CD14-positive monocyte (primary cell): ENCODE measurements at regions of chr2 and their contacts with region 1.

Region 1: DNA sequence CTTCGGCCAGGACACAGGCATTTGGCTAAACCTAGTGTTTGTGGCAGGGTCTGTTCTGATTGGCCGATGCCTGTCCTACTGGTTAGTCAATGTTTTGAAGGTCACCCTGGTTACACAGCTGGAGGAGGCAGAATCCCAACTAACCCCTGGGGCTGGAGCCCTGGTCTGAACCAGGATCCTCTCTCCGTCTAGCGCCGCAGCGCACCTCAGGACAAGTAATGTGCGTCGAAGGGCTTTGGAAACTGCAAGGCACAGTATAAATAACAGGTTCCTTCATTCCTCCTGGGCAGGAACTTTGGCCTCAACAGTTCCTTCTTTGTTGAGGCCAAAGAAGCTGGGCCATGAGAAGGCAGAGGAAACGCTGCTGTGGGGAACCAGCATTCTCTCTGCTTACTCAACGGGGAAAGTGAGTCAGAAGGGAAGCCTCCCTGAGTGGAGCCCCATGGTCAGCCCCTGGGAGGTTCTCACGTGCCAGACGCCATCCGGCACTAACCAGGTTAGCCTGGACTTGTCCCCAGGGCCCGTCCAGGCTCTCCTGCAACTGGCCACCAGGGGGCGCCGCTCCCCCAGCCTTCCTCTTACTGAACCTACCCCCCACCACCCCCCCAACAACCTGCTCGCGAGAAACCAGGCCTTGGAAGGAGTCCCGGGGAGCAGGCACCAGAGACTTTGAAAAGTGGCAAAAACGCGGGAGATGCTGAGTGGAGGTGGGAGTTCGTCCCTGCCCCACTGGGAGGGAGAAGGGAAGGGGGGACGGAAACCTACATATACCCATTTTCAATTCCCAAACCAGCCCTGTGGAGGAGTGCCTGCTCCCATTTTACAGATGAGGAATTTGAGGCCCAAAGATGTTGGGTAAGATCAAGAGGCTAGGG is 19.8 kb downstream of the TEX44 start:
- DNase-seq: peak; percentile 98 to 99 (median 99)
- H3K4me3 ChIP-seq: peak overlapping the region in 1 of 3 experiments; percentile 76
- H3K4me3 Mint-ChIP-seq: peak overlapping the region; percentile 55 to 92
- H3K27ac ChIP-seq: peak overlapping the region; percentile 75 to 82
- H3K27ac Mint-ChIP-seq: peak overlapping the region; percentile 93 to 99 (median 96)
- H3K4me1 ChIP-seq: peaks cover 42 to 49% of the 10 kb centered on the region in 2 donors
- H3K4me1 Mint-ChIP-seq: peaks cover 53% of the 10 kb centered on the region
- H3K27me3 ChIP-seq: peaks cover 2 to 26% of the 10 kb centered on the region in 2 donors
- H3K27me3 Mint-ChIP-seq: peaks cover 20 to 39% (median 37%) of the 10 kb centered on the region in 3 donors
- CTCF ChIP-seq: peak; percentile 96

Region 2: DNA sequence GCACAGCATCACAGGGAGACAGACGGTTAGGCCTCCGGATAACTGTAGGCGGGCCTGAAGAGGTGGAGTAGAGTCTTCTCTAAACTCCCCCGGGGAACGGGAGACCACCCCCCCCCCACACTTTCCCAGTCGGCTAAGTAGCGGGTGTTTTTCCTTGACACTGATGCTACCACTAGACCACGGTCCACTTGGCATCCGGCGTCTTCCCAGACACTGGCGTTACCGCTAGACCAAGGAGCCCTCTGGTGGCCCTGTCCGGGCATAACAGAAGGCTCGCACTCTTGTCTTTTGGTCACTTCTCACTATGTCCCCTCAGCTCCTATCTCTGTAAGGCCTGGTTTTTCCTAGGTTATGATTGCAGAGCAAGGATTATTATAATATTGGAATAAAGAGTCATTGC is 122.4 kb before region 1 on chr2:
- intact Hi-C with region 1: no loop called
- DNase-seq: no peak
- H3K4me3 ChIP-seq: no peak overlapping the region
- H3K4me3 Mint-ChIP-seq: no peak overlapping the region
- H3K27ac ChIP-seq: no peak overlapping the region
- H3K27ac Mint-ChIP-seq: no peak overlapping the region
- H3K4me1 ChIP-seq: no peaks in the 10 kb centered on the region
- H3K4me1 Mint-ChIP-seq: no peaks in the 10 kb centered on the region
- H3K27me3 ChIP-seq: no peaks in the 10 kb centered on the region
- H3K27me3 Mint-ChIP-seq: peaks cover 0 to 7% (median 3%) of the 10 kb centered on the region in 3 donors
- CTCF ChIP-seq: peak; percentile 26

Region 3: DNA sequence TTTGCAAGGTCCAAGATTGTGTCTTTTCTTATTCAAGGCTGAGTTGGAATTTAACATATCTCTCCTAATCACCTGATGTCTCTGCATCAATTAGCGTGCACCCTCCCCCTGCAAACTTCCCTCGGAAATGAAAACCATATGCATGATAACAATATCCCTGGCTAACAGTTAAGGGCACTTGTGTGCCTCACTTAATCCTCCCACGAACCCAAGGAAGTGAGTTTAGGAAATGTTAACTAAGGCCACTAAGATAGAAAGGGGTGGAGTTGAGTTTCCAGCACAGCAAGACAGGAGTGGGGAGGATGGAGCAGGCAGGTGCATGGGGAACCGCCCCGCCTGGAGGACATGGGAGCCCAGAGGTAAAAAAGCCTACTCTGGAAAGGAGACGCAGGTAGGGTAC is 43.5 kb after region 1 on chr2:
- intact Hi-C with region 1: loop called (anchors 5 kb)
- DNase-seq: no peak
- H3K4me3 ChIP-seq: no peak overlapping the region
- H3K4me3 Mint-ChIP-seq: peak overlapping the region in 1 of 2 donors; percentile 36
- H3K27ac ChIP-seq: no peak overlapping the region
- H3K27ac Mint-ChIP-seq: no peak overlapping the region
- H3K4me1 ChIP-seq: peaks cover 10 to 11% of the 10 kb centered on the region in 2 donors
- H3K4me1 Mint-ChIP-seq: peaks cover 7% of the 10 kb centered on the region
- H3K27me3 ChIP-seq: no peaks in the 10 kb centered on the region
- H3K27me3 Mint-ChIP-seq: peaks cover 0 to 3% (median 3%) of the 10 kb centered on the region in 3 donors
- CTCF ChIP-seq: no peak

Region 4: DNA sequence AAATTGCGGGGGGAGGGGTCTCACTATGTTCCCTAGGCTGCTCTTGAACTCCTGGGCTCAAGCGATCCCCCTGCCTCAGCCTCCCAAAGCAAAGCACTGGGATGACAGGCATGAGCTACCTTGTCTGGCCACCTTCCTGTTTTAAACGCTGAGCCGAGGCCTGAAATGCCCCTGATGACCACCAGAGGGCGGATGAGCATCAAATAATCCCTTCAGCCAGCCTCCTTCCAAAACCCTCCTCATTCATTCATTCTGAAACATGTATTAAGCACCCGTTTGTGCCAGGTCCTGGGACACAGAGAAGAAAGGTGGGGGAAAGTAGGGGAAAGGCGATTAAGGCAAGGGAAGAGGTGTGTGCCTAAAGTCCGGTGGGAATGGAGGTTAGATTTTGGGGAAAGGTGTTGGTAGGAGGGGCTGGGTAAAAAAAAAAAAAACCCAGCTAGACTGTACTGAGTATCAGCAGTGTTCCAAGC is 65.3 kb after region 1 on chr2:
- intact Hi-C with region 1: loop called in 1 of 2 experiments (anchors 2 kb)
- DNase-seq: peak; percentile 83 to 88 (median 83)
- H3K4me3 ChIP-seq: no peak overlapping the region
- H3K4me3 Mint-ChIP-seq: peak overlapping the region in 1 of 2 donors; percentile 35
- H3K27ac ChIP-seq: no peak overlapping the region
- H3K27ac Mint-ChIP-seq: no peak overlapping the region
- H3K4me1 ChIP-seq: peaks cover 23 to 46% of the 10 kb centered on the region in 2 donors
- H3K4me1 Mint-ChIP-seq: peaks cover 39% of the 10 kb centered on the region
- H3K27me3 ChIP-seq: peaks cover 0 to 5% of the 10 kb centered on the region in 2 donors
- H3K27me3 Mint-ChIP-seq: peaks cover 2 to 6% (median 3%) of the 10 kb centered on the region in 3 donors
- CTCF ChIP-seq: peak; percentile 93

Region 5: DNA sequence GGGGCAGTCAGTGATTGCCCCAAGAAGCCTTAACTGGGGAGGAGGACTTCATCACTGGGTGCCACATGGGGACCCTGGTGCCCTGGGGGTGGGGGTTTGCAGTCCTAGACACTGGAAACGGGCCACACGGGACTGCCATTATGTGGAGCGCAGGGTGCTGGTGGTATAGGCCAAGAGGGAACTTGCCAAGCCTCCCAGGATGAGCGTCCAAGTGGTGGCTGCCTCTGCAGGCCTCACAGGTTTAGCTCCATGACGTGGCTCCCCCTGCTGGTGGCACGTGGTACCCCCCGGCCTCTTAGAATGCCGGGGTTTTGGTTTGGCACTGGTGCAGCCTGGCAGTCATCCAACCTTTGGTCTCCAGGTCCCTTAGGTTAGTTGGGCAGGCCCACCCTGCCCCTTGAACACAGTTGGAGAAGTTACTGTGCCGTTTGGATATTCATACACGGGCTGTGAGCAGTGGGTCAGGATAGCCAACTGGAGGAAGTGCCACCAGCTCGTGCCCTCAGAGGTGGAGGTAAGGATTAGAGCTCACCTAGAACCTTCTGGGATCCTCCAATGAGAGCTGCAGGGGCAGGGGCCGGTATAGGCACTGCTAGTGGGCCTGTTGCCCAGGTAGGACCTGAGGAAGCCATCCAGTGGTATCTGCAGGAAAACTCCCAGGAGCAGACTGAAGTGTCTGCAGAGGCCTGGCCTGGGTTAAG is 101.5 kb after region 1 on chr2:
- intact Hi-C with region 1: loop called (anchors 2 kb)
- DNase-seq: peak; percentile 90 to 91 (median 90)
- H3K4me3 ChIP-seq: no peak overlapping the region
- H3K4me3 Mint-ChIP-seq: peak overlapping the region; percentile 4 to 65
- H3K27ac ChIP-seq: peak overlapping the region; percentile 42 to 51
- H3K27ac Mint-ChIP-seq: peak overlapping the region; percentile 90 to 100 (median 94)
- H3K4me1 ChIP-seq: peaks cover 36 to 43% of the 10 kb centered on the region in 2 donors
- H3K4me1 Mint-ChIP-seq: peaks cover 38% of the 10 kb centered on the region
- H3K27me3 ChIP-seq: no peaks in the 10 kb centered on the region
- H3K27me3 Mint-ChIP-seq: peaks cover 0 to 9% (median 0%) of the 10 kb centered on the region in 3 donors
- CTCF ChIP-seq: peak; percentile 95